ENCODE measurements at regions of chr2 and their contacts with region 1.

Region 1: DNA sequence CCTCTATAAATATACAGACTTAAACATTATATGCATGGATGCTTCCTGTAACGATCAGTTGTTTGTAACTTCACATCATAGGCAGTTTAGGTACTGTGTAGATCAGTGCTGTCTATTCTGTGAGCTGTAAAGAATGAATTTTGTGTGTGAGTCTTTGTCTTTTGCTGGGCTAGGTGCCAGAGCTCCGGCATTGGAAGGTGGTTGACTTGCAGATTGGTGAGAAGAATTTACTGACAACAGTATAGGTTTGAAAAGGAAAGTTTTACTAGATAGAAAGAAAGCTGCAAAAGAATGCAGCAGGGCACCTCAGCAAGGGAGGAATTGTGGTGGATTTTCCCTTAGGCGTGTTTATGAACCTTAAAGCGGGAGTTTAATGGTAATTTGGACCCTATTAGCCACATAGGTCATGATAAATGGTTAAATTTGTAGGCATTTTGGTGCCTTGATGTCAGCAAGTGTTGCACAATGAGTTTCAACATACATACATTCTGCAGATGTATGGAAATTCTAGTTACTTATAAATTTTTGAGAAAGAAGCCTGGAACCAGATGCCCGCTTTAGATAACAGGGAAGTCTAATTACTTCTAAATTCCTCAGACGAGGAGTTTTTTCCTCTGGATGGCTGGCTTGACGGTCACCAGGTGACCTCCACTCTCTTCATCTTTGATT is 6.7 kb upstream of the QPCT start:
- DNase-seq: no peak
- H3K4me3 Mint-ChIP-seq: no peak overlapping the region
- H3K27ac Mint-ChIP-seq: no peak overlapping the region
- H3K4me1 Mint-ChIP-seq: peaks cover 9% of the 10 kb centered on the region
- H3K27me3 Mint-ChIP-seq: peaks cover 74% of the 10 kb centered on the region

Region 2: DNA sequence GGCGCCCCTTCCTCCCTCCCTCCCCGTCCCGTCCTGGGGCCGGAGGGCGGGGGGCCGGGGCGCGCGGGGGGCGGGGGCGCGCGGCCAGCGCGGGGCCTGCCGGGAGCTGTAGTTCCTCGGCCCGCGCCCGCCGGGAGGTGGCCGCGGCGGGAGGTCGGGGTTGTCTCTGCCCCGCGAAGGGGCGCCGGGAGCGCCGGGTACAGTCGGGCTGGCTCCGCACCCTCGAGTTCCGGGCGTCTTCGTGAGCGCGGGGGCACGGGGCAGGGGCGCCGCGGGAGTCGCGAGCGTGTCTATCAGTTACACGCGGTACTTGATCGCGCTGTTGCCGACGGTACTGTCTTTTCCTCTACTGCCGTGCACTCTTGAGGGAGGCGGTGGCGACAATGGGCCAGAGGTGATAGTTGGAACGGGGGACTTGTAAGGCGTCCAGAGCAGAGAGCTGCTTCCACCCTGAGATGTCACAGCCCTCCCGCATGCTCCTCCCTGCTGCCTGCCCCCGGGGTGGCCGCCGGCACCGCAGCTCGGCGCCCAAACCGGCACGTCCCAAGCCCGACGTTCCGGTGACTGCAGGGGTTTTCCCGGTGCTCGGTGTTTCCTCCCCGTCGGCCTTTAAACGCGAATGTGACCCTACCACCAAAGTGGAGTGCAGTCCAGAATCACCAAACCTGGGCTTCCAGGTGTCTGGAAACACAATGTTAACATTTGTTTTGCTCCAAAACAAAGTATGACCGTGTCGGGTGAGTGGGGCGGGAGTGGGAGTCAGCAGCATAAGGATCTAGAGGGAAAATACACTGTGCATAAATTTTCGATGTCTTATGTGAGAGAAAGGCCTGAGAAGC is 12.8 kb before region 1 on chr2 and contains the start of gene PRKD3:
- intact Hi-C with region 1: loop called (anchors 2 kb)
- DNase-seq: peak; percentile 89
- H3K4me3 Mint-ChIP-seq: peak within 1 kb of the TSS; percentile 95
- H3K27ac Mint-ChIP-seq: peak within 1 kb of the TSS; percentile 92
- H3K4me1 Mint-ChIP-seq: peaks cover 27% of the 10 kb centered on the region
- H3K27me3 Mint-ChIP-seq: peaks cover 48% of the 10 kb centered on the region
- total RNA-seq, gene PRKD3: 20.2 and 21.9 TPM in 2 replicates